ENCODE measurements at regions of chr19 and their contacts with region 1.

Region 1: GRCh38 chr19:16382775-16383543 is 58.3 kb downstream of the KLF2 start:
- DNase-seq: peak; percentile 67 to 80 (median 68)
- H3K4me3 ChIP-seq: no peak overlapping the region
- H3K27ac ChIP-seq: no peak overlapping the region
- H3K4me1 ChIP-seq: no peaks in the 10 kb centered on the region
- H3K27me3 ChIP-seq: no peaks in the 10 kb centered on the region

Region 2: GRCh38 chr19:16363133-16363851 is 19.7 kb before region 1 on chr19:
- CTCF ChIA-PET with region 1: interaction called, 15 read pairs
- POLR2A ChIA-PET with region 1: no interaction called
- DNase-seq: no peak
- H3K4me3 ChIP-seq: no peak overlapping the region
- H3K27ac ChIP-seq: no peak overlapping the region
- H3K4me1 ChIP-seq: peaks cover 23 to 43% (median 38%) of the 10 kb centered on the region in 4 experiments
- H3K27me3 ChIP-seq: peaks cover 0 to 2% (median 0%) of the 10 kb centered on the region in 5 experiments

Region 3: GRCh38 chr19:16371540-16371986 is 11.4 kb before region 1 on chr19:
- CTCF ChIA-PET with region 1: interaction called, 19 read pairs
- POLR2A ChIA-PET with region 1: no interaction called
- DNase-seq: peak; percentile 70 to 95 (median 93)
- H3K4me3 ChIP-seq: peak overlapping the region in 5 of 7 experiments; percentile 4 to 62 (median 20)
- H3K27ac ChIP-seq: no peak overlapping the region
- H3K4me1 ChIP-seq: peaks cover 37 to 65% (median 59%) of the 10 kb centered on the region in 4 experiments
- H3K27me3 ChIP-seq: peaks cover 0 to 4% (median 2%) of the 10 kb centered on the region in 5 experiments

Region 4: DNA sequence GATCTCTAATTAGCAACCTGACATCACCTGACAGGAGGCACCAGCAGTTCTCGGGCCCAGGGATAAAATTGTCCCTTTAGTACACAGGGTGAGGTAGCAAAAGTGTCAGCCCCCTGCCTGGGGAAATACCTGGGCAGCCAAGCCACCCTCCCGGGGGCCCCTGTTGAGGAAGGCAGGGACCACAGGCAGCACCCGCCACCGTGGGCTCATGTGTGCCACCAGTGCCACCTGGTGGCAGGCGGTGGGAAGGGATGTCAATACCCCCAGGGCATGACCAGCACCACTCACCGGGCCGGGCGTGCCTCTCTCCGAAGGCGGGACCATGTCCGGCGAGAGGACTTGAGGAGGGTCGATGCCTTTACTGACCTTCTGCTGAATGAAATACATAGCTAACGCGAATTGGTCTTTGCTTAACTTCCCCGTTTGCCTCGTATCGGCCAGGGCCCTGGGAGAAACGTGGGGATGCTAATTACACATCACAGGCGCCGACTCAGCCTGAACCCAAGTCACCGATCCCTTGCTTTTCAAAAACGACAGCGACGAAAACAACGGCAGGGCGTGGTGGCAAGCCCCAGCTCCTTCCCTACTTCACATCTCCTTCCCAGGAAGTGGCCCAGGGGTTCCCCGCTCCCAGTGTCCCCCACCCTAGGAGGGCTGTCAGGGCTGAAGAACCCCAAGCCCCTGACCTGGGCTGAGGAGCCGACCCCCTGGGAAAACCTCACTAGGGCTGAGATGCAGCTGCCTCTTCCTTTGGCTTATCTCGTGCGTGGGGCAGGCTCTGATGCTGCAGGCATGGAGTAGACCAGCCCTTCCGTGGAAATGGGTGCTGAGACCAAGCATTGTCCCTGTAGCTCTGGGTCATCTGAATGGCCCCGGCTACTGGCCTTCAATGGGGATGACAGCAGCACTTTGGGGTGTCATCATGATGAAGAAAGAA is 35.0 kb after region 1 on chr19:
- CTCF ChIA-PET with region 1: interaction called, 11 read pairs
- POLR2A ChIA-PET with region 1: no interaction called
- DNase-seq: peak; percentile 57 to 77 (median 76)
- H3K4me3 ChIP-seq: no peak overlapping the region
- H3K27ac ChIP-seq: no peak overlapping the region
- H3K4me1 ChIP-seq: peaks cover 0 to 4% (median 1%) of the 10 kb centered on the region in 4 experiments
- H3K27me3 ChIP-seq: no peaks in the 10 kb centered on the region

Measured in common myeloid progenitor, CD34-positive (primary cell).